Uterus (tissue), 4 donors: ENCODE measurements at regions of chr10 and their contacts with region 1.

Region 1: GRCh38 chr10:20048161-20048560 is 231.9 kb downstream of the PLXDC2 start:
- DNase-seq: no peak
- H3K4me3 ChIP-seq: no peak overlapping the region
- H3K27ac ChIP-seq: no peak overlapping the region
- H3K4me1 ChIP-seq: no peaks in the 10 kb centered on the region
- H3K27me3 ChIP-seq: no peaks in the 10 kb centered on the region
- CTCF ChIP-seq: no peak
- POLR2A ChIP-seq: no peak

Region 2: GRCh38 chr10:20004087-20004523 is 44.1 kb before region 1 on chr10:
- intact Hi-C with region 1: no loop called
- DNase-seq: peak in 1 of 2 donors; percentile 31
- H3K4me3 ChIP-seq: no peak overlapping the region
- H3K27ac ChIP-seq: peak overlapping the region; percentile 53 to 58
- H3K4me1 ChIP-seq: no peaks in the 10 kb centered on the region
- H3K27me3 ChIP-seq: no peaks in the 10 kb centered on the region
- CTCF ChIP-seq: no peak
- POLR2A ChIP-seq: no peak

Region 3: DNA sequence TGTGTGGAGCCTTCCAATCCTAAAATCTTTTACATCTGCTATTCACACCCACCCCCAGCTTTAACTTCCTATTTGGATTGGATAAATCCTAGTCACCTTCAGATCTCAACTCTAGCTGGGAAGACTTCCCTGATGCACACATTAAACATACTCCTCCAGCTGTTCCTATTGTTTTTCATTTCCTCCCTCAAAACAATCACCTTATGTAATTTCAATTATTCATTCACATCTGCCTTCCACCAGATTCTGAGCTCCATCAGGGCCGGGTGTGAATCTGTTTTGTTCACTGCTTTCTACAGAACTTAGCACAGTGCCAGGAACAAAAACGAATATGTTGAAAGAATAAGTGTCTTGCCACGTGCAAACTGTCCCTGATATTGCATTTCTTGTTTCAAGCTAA is 265.5 kb after region 1 on chr10:
- intact Hi-C with region 1: loop called (anchors 5 kb)
- DNase-seq: no peak
- H3K4me3 ChIP-seq: no peak overlapping the region
- H3K27ac ChIP-seq: no peak overlapping the region
- H3K4me1 ChIP-seq: no peaks in the 10 kb centered on the region
- H3K27me3 ChIP-seq: no peaks in the 10 kb centered on the region
- CTCF ChIP-seq: no peak
- POLR2A ChIP-seq: no peak